Activated naive CD4-positive, alpha-beta T cell treated with anti-CD3 and anti-CD28 coated beads, Interleukin-2, amount 10 ng/mL, durations not matched to agents 7 days and 5 days (primary cell): ENCODE measurements at regions of chr3 and their contacts with region 1.

Region 1: DNA sequence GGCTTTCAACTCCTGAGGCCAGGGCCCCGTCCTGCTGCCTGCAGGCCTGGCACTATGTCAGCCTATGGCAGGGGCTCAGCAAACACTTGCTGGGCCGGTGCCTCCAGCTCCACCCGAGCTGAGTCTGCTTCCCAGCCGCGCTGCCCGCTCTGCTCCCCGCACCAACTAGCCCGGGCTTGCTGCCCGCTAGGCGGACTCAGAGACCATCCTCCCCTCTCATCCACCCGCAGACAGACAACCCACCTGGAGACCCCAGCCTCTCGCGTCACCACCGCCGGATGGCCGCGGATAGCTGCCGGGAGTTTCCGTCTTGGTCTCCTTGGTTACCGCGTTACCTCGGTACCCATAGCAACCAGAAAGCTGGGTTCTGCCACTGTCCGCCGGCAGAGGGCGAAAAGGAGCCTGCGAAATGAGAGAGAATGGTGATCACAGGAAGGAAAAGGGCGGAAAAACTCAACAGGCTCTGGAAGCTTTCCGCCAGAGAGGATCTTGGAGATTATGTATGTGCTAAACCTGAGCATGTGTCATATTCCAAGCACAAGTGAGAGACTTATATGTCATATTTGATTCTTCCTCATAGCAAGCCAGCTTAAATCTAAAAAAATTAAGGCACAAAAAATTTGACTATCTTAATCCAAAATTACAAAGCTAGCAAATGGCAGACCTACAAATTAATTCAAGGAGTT is at the start of gene ZBBX:
- DNase-seq: peak; percentile 90
- H3K4me3 Mint-ChIP-seq: peak within 1 kb of the TSS; percentile 66
- H3K27ac Mint-ChIP-seq: peak within 1 kb of the TSS; percentile 77
- H3K4me1 Mint-ChIP-seq: peaks cover 8% of the 10 kb centered on the region
- H3K27me3 Mint-ChIP-seq: peaks cover 9% of the 10 kb centered on the region

Region 2: GRCh38 chr3:167394003-167394402 is 13.9 kb after region 1 on chr3:
- CTCF ChIA-PET with region 1: interaction called, 12 read pairs
- DNase-seq: no peak
- H3K4me3 Mint-ChIP-seq: no peak overlapping the region
- H3K27ac Mint-ChIP-seq: no peak overlapping the region
- H3K4me1 Mint-ChIP-seq: no peaks in the 10 kb centered on the region
- H3K27me3 Mint-ChIP-seq: no peaks in the 10 kb centered on the region

Region 3: DNA sequence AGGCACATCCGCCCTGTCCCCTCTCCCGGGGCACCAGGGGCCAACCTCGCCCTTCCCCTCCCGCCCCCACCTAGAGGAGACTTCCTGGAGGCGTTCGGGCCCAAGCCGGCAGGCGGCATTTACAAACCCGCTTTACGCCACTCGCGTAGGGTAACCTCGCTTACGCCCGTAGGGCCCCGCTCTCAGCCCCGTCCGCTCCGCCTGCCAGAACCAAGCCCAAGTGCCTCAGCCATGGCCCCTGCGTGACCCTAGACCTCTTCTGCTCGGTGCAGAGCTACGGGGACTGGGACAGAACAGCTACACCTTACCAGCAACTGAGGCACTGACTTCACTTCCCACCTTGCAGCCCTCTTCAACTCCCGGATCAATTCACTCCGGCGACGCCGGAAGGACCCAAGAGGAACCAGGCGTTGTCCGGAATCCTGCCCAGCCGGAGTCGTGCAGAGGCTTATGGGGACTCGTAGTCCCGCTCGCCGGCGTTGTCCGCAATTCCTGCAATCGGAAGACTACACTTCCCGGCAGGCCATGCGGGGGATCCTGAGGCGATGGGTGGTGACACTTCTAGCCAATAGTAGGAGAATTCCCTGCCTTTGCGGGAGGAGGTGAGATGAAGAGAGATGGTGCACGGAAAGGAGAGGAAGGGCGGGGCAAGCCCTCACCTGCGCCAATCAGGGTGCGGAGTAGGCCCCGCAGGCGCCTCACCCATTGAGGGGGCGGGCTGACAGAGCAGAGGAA is 354.5 kb after region 1 on chr3 and contains the start of gene PDCD10:
- CTCF ChIA-PET with region 1: interaction called, 10 read pairs
- DNase-seq: peak; percentile 98
- H3K4me3 Mint-ChIP-seq: no peak within 1 kb of the TSS
- H3K27ac Mint-ChIP-seq: no peak within 1 kb of the TSS
- H3K4me1 Mint-ChIP-seq: peaks cover 6% of the 10 kb centered on the region
- H3K27me3 Mint-ChIP-seq: no peaks in the 10 kb centered on the region

Region 4: GRCh38 chr3:167740961-167741587 is 360.9 kb after region 1 on chr3:
- CTCF ChIA-PET with region 1: interaction called, 15 read pairs
- DNase-seq: peak; percentile 54
- H3K4me3 Mint-ChIP-seq: no peak overlapping the region
- H3K27ac Mint-ChIP-seq: no peak overlapping the region
- H3K4me1 Mint-ChIP-seq: peaks cover 4% of the 10 kb centered on the region
- H3K27me3 Mint-ChIP-seq: no peaks in the 10 kb centered on the region

Region 5: GRCh38 chr3:167882067-167882667 is 502.0 kb after region 1 on chr3:
- CTCF ChIA-PET with region 1: interaction called, 43 read pairs
- DNase-seq: no peak
- H3K4me3 Mint-ChIP-seq: no peak overlapping the region
- H3K27ac Mint-ChIP-seq: no peak overlapping the region
- H3K4me1 Mint-ChIP-seq: no peaks in the 10 kb centered on the region
- H3K27me3 Mint-ChIP-seq: peaks cover 7% of the 10 kb centered on the region